Calu3 (cell line): ENCODE measurements at regions of chr4 and their contacts with region 1.

Region 1: GRCh38 chr4:85756938-85757337 is 282.0 kb downstream of the ARHGAP24 start:
- DNase-seq: peak; percentile 28
- H3K4me3 Mint-ChIP-seq: no peak overlapping the region
- H3K27ac Mint-ChIP-seq: no peak overlapping the region
- H3K4me1 Mint-ChIP-seq: no peaks in the 10 kb centered on the region
- H3K27me3 Mint-ChIP-seq: no peaks in the 10 kb centered on the region
- CTCF ChIP-seq: no peak

Region 2: DNA sequence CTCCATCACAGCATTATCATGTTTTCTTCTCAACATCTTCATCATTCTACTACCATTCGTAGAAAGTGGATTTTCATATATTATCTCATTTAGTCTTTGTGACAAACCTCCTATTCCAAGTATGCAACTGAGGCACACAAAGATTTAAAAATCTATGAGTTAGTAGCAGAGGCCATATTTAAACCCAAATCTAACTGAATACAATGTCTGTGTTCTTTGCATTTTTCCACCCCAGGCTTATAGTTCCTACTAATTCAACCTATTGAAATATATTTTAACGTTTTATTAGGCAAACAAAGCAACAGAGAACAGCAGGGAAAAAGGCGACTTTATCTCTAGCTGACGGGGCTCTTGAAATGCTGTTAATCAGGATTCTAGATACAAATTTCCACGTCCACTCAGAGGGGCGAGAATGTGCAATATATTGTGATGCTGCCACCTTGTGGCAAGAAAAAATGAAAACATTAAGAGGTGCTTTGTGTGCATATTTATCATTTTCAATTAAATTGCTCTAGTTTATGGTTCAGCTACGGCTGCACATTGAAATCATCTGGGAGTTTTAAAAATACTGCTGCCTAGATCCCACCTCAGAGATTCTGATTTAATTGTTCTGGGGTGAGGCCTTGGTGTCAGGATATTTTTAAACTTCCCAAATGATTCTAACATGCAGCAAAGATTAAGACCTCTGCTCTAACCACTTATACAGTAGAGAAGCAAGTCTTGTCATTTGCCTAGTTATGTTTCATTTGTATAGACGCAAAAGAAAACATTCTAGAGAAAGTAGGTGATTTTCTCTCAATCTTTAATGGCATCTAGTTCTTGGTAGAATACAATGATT is 287.0 kb after region 1 on chr4:
- CTCF ChIA-PET with region 1: no interaction called
- intact Hi-C with region 1: loop called (anchors 2 kb)
- DNase-seq: peak; percentile 48
- H3K4me3 Mint-ChIP-seq: no peak overlapping the region
- H3K27ac Mint-ChIP-seq: no peak overlapping the region
- H3K4me1 Mint-ChIP-seq: peaks cover 13% of the 10 kb centered on the region
- H3K27me3 Mint-ChIP-seq: no peaks in the 10 kb centered on the region
- CTCF ChIP-seq: peak; percentile 22